ENCODE measurements at regions of chr22 and their contacts with region 1.

Region 1: GRCh38 chr22:28051787-28052356 is 132.8 kb upstream of the PITPNB start:
- DNase-seq: peak; percentile 61
- ATAC-seq: peak; percentile 79; the same call in 1 of the 2 replicates
- H3K4me3 ChIP-seq: no peak overlapping the region
- H3K27ac ChIP-seq: no peak overlapping the region
- H3K4me1 ChIP-seq: peaks cover 3% of the 10 kb centered on the region; the same call in 1 of the 2 replicates
- H3K27me3 ChIP-seq: no peaks in the 10 kb centered on the region
- CTCF ChIP-seq: peak; percentile 90
- POLR2A ChIP-seq: 0 out of 2 replicates have a peak, but pooled peaks have one; percentile 23
- RAD21 ChIP-seq: peak; percentile 92

Region 2: GRCh38 chr22:28259774-28260312 is 208.0 kb after region 1 on chr22:
- CTCF ChIA-PET with region 1: no interaction called
- POLR2A ChIA-PET with region 1: no interaction called
- dilution Hi-C with region 1: no loop called
- in situ Hi-C with region 1: no loop called
- intact Hi-C with region 1: loop called (anchors 5 kb)
- DNase-seq: no peak
- ATAC-seq: no peak
- H3K4me3 ChIP-seq: no peak overlapping the region
- H3K27ac ChIP-seq: no peak overlapping the region
- H3K4me1 ChIP-seq: no peaks in the 10 kb centered on the region
- H3K27me3 ChIP-seq: no peaks in the 10 kb centered on the region
- CTCF ChIP-seq: no peak
- POLR2A ChIP-seq: no peak
- RAD21 ChIP-seq: no peak

Region 3: GRCh38 chr22:28341001-28341400 is 289.1 kb after region 1 on chr22:
- CTCF ChIA-PET with region 1: no interaction called
- POLR2A ChIA-PET with region 1: no interaction called
- dilution Hi-C with region 1: no loop called
- in situ Hi-C with region 1: no loop called
- intact Hi-C with region 1: loop called (anchors 5 kb)
- DNase-seq: peak; percentile 12
- ATAC-seq: 0 out of 2 replicates have a peak, but pooled peaks have one; percentile 17
- H3K4me3 ChIP-seq: no peak overlapping the region
- H3K27ac ChIP-seq: no peak overlapping the region
- H3K4me1 ChIP-seq: peaks cover 2% of the 10 kb centered on the region
- H3K27me3 ChIP-seq: no peaks in the 10 kb centered on the region
- CTCF ChIP-seq: no peak
- POLR2A ChIP-seq: no peak
- RAD21 ChIP-seq: no peak

Region 4: GRCh38 chr22:28829358-28830181 is 777.7 kb after region 1 on chr22:
- CTCF ChIA-PET with region 1: no interaction called
- POLR2A ChIA-PET with region 1: no interaction called
- dilution Hi-C with region 1: no loop called
- in situ Hi-C with region 1: loop called (anchors 10 kb)
- intact Hi-C with region 1: loop called (anchors 1 kb)
- DNase-seq: peak; percentile 73
- ATAC-seq: peak; percentile 97
- H3K4me3 ChIP-seq: no peak overlapping the region
- H3K27ac ChIP-seq: no peak overlapping the region
- H3K4me1 ChIP-seq: no peaks in the 10 kb centered on the region
- H3K27me3 ChIP-seq: no peaks in the 10 kb centered on the region
- CTCF ChIP-seq: peak; percentile 97
- POLR2A ChIP-seq: no peak; the same call in 1 of the 2 replicates
- RAD21 ChIP-seq: peak; percentile 94

Measured in IMR-90 (cell line).